PC-3 (cell line): ENCODE measurements at regions of chr10 and their contacts with region 1.

Region 1: DNA sequence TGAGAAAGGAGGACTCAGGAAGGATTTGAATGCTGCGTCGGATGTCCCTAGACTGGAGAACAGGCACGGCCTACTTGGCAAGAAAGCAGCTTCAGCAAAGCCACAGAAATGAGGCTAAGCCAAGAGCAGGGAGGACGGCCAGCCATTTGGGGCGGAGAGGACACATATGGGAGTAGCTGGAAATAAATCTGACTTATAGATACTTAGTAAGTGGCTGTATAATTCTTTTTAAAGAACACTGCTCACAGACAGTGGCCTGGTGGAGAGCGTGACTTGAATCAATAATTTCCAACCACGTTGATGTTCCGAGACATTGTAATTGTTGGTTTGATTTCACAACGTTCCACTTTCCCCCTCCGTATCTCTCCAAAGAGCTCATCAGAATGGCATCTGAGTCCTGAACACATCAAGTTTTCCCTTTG is 67.7 kb upstream of the JCAD start:
- DNase-seq: no peak
- ATAC-seq: no peak
- H3K4me3 ChIP-seq: no peak overlapping the region
- H3K27ac ChIP-seq: no peak overlapping the region
- H3K4me1 ChIP-seq: no peaks in the 10 kb centered on the region
- H3K27me3 ChIP-seq: no peaks in the 10 kb centered on the region
- CTCF ChIP-seq: no peak

Region 2: GRCh38 chr10:30178565-30178964 is 51.4 kb after region 1 on chr10:
- CTCF ChIA-PET with region 1: no interaction called
- POLR2A ChIA-PET with region 1: interaction called, 12 read pairs
- intact Hi-C with region 1: no loop called
- DNase-seq: peak; percentile 53
- ATAC-seq: no peak
- H3K4me3 ChIP-seq: no peak overlapping the region
- H3K27ac ChIP-seq: no peak overlapping the region
- H3K4me1 ChIP-seq: peaks cover 24% of the 10 kb centered on the region
- H3K27me3 ChIP-seq: no peaks in the 10 kb centered on the region
- CTCF ChIP-seq: no peak